ENCODE measurements at regions of chr2 and their contacts with region 1.

Region 1: GRCh38 chr2:173986805-173987204 is 21.6 kb upstream of the SP3 start:
- DNase-seq: no peak
- ATAC-seq: no peak
- H3K4me3 Mint-ChIP-seq: no peak overlapping the region
- H3K27ac Mint-ChIP-seq: no peak overlapping the region
- H3K4me1 Mint-ChIP-seq: no peaks in the 10 kb centered on the region
- H3K27me3 Mint-ChIP-seq: peaks cover 2% of the 10 kb centered on the region

Region 2: DNA sequence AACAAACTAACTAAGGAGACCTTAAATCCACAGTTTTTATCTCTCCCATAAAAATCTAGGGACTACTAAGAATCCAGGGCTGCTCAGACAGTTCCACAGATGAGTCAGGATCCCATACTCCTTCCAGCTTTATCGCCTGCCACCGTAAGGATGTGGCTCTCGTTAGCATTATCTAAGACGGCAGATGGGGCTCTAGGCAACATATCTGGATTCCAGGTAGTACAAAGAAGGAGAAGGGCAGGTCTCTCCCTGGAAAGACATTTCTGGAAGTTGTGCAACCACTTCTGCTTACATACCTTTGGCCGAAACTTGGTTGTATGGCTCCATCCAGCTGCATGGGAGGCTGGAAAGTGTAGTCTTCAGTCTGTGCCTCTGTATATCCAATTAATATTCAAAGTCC is 171.0 kb before region 1 on chr2:
- CTCF ChIA-PET with region 1: no interaction called
- POLR2A ChIA-PET with region 1: no interaction called
- DNase-seq: no peak
- ATAC-seq: no peak
- H3K4me3 Mint-ChIP-seq: no peak overlapping the region
- H3K27ac Mint-ChIP-seq: no peak overlapping the region
- H3K4me1 Mint-ChIP-seq: no peaks in the 10 kb centered on the region
- H3K27me3 Mint-ChIP-seq: peaks cover 7% of the 10 kb centered on the region

Region 3: GRCh38 chr2:173972603-173973002 is 14.2 kb before region 1 on chr2:
- CTCF ChIA-PET with region 1: no interaction called
- POLR2A ChIA-PET with region 1: no interaction called
- DNase-seq: no peak
- ATAC-seq: no peak
- H3K4me3 Mint-ChIP-seq: no peak overlapping the region
- H3K27ac Mint-ChIP-seq: no peak overlapping the region
- H3K4me1 Mint-ChIP-seq: no peaks in the 10 kb centered on the region
- H3K27me3 Mint-ChIP-seq: peaks cover 1% of the 10 kb centered on the region

Region 4: DNA sequence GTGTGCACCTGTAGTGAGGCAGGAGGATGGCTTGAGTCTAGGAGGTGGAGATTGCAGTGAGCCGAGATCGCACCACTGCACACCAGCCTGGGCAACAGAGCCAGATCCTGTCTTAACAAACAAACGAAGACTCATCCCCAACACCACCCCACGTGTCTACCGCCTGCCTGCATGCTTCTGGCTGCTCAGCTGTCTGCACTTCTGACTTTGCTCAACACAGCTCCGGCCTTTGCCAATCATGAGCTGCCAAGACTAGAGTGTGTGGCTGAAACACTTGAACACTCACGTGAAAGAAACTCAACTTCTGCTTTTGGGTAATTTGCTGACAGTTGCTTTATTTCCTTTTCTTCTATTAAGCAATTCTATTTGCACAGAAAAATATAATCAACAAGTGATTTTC is 10.5 kb after region 1 on chr2:
- CTCF ChIA-PET with region 1: interaction called, 13 read pairs
- POLR2A ChIA-PET with region 1: interaction called, 5 read pairs
- DNase-seq: no peak
- ATAC-seq: no peak
- H3K4me3 Mint-ChIP-seq: no peak overlapping the region
- H3K27ac Mint-ChIP-seq: no peak overlapping the region
- H3K4me1 Mint-ChIP-seq: no peaks in the 10 kb centered on the region
- H3K27me3 Mint-ChIP-seq: peaks cover 22% of the 10 kb centered on the region